Posterior vena cava (tissue), 2 donors: ENCODE measurements at regions of chr7 and their contacts with region 1.

Region 1: GRCh38 chr7:154927624-154928143 is 75.2 kb downstream of the PAXIP1 start:
- DNase-seq: no peak

Region 2: GRCh38 chr7:154879629-154880028 is 48.1 kb before region 1 on chr7:
- intact Hi-C with region 1: no loop called
- DNase-seq: no peak

Region 3: DNA sequence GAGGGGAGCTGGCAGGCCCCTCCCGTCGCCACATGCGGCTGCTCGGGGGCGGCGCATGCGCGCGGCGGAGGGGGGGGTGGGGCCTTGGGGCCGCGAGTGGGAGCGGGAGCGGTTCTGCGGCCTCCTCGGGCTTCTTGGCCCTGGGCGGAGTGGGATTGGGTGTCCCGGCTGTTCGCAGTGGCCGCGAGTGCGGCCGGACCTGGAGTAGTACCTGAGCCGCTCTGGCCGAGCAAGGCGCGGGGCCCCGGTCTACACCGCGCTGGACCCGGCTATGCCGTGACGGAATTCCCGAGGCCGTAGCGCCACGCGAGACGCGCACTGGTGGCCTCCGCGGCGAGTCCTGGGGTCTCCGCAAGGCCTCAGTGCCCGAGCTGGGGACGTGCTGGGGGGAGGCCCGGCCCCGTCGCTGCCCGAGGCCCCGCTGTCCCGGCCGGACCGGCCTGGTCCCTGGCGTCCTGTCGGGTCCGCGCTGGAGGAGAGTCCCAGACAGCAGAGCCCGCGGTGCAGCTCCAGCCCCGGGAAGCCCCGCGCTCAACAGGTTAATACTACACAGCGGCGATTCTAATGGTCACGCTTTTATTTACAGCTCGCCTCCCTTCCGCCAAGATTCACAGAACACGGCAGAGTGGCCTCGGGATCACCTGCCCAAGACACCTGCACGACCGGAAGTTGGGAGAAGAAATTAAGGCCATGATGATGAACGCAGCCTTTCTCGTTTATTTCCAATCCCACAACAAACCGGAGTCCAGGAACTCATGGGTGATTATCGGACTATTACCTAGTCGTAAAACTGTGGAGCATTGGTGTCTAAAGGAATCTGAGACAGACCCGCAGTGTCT is 75.9 kb after region 1 on chr7:
- intact Hi-C with region 1: loop called in 1 of 2 experiments (anchors 10 kb)
- DNase-seq: peak; percentile 93

Region 4: DNA sequence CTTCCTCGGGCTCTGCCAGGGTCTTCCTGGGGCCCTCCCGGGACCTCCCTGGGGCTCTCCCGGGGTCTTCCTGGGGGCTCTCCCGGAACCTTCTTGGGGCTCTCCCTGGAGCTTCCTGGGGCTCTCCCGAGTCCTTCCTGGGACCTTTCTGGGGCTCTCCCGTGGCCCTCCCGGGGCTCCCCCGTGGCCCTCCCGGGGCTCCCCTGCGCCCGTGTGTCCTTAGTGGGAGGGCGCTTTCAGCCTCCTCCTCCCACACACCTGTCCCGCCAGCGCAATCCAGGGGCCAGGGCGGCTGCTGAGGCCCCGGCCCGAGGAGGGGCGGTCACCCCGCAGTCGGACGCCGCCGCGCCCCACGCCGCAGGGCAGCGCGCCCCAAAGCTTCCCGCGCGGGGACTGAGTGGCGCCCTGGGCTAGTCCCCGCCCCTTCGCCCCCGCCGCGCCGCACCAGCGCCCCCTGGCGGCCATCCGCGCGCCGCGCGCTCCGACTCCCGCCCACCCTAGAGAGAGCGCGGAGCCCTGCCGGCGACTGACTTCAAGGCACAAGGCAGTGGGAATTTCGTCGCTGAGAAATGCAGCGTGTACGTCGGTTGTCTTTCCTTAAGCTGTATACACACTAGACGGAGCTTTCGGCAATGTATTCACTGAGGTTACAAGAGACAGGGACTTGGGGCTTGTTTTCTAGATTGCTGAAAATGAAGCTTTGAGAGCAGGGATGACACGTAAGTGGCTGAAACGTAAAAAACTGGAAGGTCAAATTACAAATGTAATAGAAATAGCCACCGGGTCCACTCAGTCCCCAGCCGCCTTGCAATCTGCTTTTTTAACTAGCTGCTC is 417.1 kb after region 1 on chr7:
- intact Hi-C with region 1: loop called in 1 of 2 experiments (anchors 5 kb)
- DNase-seq: peak; percentile 95